ENCODE measurements at regions of chr2 and their contacts with region 1.

Region 1: DNA sequence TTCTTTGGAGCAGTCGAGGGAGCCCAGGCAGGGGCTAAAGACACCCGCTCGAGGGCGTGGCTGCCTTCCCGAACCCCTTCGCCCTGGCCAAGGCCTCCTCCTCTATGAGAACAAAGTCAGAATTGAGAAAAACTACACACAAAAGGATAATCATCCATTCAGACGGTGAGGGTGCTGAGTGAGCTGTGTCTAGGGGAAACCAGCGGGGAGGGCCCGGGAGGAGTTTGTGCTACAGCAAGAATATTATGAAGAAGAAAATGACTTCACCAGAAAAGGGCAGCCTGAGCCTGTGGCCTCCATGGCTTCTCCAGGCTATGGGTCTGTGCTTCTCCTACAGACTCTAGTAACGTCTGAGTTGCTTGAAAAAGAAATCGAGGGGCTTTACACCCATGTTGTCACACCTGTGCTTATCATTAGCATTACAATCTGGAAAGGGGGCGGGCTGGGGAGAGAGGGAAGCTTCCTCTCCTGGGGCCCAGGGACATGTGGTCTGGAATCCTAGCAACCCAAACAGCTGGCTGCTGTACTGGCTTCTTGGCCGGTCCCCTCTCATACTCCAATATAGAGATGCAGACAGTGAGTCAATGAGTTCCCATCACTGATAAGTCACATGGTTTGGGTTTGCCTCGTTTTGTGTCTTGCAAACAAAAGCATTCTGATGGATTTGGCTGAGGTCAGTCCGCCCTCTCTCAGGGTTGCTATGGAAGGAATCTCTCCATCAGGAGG is 52.0 kb upstream of the ARL4C start:
- DNase-seq: no peak
- H3K4me3 ChIP-seq: no peak overlapping the region
- H3K27ac ChIP-seq: no peak overlapping the region
- H3K4me1 ChIP-seq: peaks cover 0 to 3% (median 0%) of the 10 kb centered on the region in 3 donors
- H3K27me3 ChIP-seq: no peaks in the 10 kb centered on the region
- CTCF ChIP-seq: no peak

Region 2: DNA sequence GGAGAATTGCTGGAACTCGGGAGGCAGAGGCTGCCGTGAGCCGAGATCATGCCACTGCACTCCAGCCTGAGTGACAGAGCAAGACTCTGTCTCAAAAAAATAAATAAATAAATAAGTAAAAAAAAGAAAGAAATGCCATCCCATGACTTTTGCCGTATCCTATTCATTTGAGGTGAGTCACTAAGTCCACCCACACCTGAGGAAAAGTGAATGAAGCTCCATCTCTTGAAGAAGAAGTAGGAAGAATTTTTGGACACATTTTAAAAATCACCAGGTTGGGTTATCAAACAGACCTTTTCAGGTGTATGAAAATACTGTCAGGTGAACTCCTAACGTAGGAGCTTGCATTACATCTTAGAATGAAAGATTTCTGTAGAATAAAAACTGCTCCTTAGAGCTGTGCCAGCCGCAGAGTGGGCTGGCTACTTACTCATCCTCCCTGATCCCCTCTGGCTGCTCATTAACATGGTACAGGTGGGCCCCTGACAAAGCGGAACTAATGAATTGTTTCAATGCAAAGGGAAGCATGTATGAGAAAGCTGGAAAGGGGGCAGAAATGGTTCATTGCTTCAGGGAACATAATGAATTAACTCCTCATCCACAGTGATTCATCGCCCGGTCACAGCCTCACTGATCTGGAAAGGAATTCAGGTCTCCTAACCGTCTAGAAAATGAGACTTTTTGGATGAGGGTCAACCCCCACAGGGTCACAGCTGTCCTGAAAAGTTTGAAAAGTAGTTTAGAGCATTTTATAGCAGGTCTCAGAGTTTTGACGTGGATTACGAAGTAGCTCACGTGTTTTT is 307.0 kb before region 1 on chr2:
- intact Hi-C with region 1: no loop called
- DNase-seq: peak in 4 of 5 donors; percentile 77 to 96 (median 91)
- H3K4me3 ChIP-seq: no peak overlapping the region
- H3K27ac ChIP-seq: no peak overlapping the region
- H3K4me1 ChIP-seq: peaks cover 0 to 4% (median 0%) of the 10 kb centered on the region in 3 donors
- H3K27me3 ChIP-seq: no peaks in the 10 kb centered on the region
- CTCF ChIP-seq: no peak

Region 3: DNA sequence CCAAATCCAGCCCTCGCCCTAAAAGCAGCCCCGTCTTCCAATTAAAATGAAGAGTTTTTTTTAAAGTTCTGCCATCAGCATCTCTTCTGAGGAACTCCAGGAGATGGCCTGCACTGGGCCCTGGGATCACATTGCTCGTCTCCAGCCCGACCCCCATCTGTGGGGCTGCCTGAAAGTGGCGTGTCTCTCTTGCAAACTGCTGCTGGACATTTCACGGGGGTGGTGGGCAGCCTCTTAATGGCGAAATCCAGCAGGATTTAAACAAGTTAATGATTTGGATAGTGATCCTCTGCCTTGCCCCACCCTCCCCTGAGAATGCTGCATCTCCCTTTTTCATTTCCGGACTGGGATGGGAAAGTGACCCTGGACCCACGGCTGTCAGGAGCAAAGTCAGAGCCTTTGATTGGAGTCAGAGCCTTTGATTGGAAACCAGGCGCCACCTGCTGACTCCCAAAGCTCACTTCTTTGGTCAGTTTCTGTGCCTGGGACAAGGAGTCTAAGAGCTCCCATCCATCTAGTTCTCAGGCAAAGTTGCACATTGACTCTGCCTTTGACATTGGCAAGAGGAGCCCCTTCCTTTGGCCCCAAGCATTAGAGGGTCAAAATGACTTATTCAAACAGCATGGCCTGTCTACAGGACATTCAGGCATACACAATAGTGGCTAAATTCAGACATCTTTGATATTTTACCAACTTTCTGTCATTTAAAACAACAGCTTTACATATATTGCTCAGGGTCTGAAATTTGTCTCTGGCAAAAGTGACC is 558.2 kb after region 1 on chr2:
- intact Hi-C with region 1: loop called (anchors 2 kb)
- DNase-seq: peak in 4 of 5 donors; percentile 81 to 92 (median 88)
- H3K4me3 ChIP-seq: no peak overlapping the region
- H3K27ac ChIP-seq: no peak overlapping the region
- H3K4me1 ChIP-seq: no peaks in the 10 kb centered on the region
- H3K27me3 ChIP-seq: no peaks in the 10 kb centered on the region
- CTCF ChIP-seq: peak; percentile 62